Natural killer cell (primary cell): ENCODE measurements at regions of chr11 and their contacts with region 1.

Region 1: DNA sequence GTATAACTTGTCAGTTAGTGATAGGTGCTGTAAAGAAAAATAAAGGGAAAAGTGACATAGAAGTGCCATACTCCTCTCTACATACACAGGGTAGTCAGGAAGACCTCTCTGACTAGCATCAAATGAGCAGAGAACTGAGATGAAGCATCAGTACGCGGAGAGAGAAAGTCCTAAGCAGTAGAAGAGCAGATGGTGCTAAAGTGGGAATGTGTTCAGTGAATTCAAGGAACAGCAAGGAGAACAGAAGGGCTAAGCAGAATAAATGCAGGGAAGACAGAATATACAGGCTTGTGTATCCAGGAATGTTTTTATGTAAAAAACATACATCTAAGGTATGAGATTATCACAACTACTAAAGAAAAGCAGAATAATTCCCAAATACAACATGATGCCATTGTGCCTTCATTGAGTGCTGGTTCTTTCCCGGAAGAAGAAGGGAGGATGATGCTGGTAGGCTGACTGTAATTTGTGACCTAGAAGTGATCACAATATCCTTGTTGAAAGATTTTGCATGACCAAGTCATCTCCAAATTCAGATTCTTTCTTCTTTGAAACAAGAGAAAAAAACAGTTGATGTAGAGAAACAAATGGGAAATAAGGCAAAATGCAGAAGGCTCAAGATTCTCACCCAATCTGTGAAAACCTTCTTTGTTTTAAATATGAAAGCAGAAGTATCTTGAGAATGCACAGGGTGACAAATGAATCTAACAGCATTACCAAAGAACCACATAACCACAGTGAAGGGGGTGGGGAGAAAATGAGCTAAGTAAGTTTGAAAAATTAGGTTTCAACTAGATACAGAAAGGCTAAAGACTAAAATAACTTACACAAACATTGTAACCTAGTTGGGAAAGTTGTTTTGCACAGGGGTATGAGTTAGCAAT is 20.5 kb downstream of the MRE11 start:
- DNase-seq: peak in 1 of 2 donors; percentile 58
- ATAC-seq: peak; percentile 93 to 99 (median 96)
- H3K4me3 ChIP-seq: no peak overlapping the region
- H3K4me3 Mint-ChIP-seq: peak overlapping the region; percentile 69
- H3K27ac ChIP-seq: peak overlapping the region; percentile 87
- H3K27ac Mint-ChIP-seq: peak overlapping the region; percentile 84 to 95
- H3K4me1 ChIP-seq: peaks cover 8% of the 10 kb centered on the region
- H3K4me1 Mint-ChIP-seq: peaks cover 29 to 36% of the 10 kb centered on the region in 2 donors
- H3K27me3 ChIP-seq: no peaks in the 10 kb centered on the region
- H3K27me3 Mint-ChIP-seq: no peaks in the 10 kb centered on the region
- CTCF ChIP-seq: no peak

Region 2: DNA sequence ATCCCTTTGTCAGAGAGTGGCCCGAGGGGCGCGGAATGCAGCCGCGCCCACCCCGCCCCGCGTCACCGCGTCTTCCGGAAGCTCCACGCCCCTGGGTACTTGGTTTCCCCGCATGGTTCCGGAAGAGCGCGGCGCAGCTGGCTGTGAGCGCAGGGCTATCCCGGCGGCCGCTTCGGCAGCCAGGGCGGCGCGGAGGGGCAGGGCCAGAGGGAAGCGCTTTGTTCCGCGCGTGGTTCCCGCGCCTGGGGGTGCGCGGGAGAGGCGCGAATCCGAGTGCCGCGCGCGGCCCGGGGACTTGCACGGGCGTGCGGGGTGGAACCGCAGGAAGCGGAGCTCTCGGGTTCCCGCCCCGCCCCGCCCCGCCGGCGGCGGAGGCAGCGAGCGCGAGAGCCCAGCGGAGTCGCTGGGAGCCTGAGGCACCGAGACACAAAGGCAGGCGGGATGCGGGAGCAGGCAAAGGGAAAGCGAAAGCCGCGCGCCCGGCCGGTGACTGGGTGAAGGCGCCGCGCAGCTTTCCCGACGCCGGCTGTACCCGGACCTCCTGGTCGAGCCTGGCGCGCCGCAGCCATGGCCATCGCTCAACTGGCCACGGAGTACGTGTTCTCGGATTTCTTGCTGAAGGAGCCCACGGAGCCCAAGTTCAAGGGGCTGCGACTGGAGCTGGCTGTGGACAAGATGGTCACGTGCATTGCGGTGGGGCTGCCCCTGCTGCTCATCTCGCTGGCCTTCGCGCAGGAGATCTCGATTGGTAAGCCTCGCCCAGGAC is 344.2 kb before region 1 on chr11 and contains the start of gene PANX1:
- intact Hi-C with region 1: loop called (anchors 5 kb)
- DNase-seq: peak; percentile 61 to 93
- ATAC-seq: peak; percentile 80 to 90 (median 88)
- H3K4me3 ChIP-seq: peak within 1 kb of the TSS; percentile 84
- H3K4me3 Mint-ChIP-seq: no peak within 1 kb of the TSS
- H3K27ac ChIP-seq: peak within 1 kb of the TSS; percentile 85
- H3K27ac Mint-ChIP-seq: no peak within 1 kb of the TSS
- H3K4me1 ChIP-seq: peaks cover 31% of the 10 kb centered on the region
- H3K4me1 Mint-ChIP-seq: peaks cover 22 to 27% of the 10 kb centered on the region in 2 donors
- H3K27me3 ChIP-seq: no peaks in the 10 kb centered on the region
- H3K27me3 Mint-ChIP-seq: no peaks in the 10 kb centered on the region
- CTCF ChIP-seq: no peak
- total RNA-seq, gene PANX1: 8.6 to 13.6 (median 13.4) TPM

Region 3: GRCh38 chr11:94449437-94449836 is 23.7 kb before region 1 on chr11:
- intact Hi-C with region 1: no loop called
- DNase-seq: no peak
- ATAC-seq: no peak
- H3K4me3 ChIP-seq: no peak overlapping the region
- H3K4me3 Mint-ChIP-seq: no peak overlapping the region
- H3K27ac ChIP-seq: no peak overlapping the region
- H3K27ac Mint-ChIP-seq: no peak overlapping the region
- H3K4me1 ChIP-seq: no peaks in the 10 kb centered on the region
- H3K4me1 Mint-ChIP-seq: peaks cover 6 to 12% of the 10 kb centered on the region in 2 donors
- H3K27me3 ChIP-seq: no peaks in the 10 kb centered on the region
- H3K27me3 Mint-ChIP-seq: no peaks in the 10 kb centered on the region
- CTCF ChIP-seq: no peak

Region 4: DNA sequence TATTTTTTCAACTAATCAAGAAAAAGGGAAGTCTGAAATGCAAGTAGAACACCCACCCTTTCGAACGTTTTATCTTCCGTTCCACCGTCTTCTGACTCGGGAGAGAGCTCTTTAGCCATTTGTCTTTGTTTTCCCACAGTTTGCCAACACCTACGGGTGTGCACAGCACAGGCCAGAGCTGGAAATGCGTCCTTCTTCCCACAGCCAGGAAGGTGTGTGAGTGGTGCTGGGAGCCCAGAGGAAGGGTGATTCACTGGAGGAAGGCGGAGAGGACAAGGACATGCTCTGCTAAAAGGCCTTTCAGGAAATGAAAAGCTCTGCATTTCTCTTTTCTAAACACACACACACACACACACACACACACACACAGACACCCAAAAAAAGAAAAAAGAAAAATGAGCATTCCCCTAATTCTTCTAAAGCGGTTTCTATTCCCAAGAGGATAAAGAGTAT is 635.0 kb after region 1 on chr11:
- intact Hi-C with region 1: no loop called
- DNase-seq: no peak
- ATAC-seq: no peak
- H3K4me3 ChIP-seq: no peak overlapping the region
- H3K4me3 Mint-ChIP-seq: no peak overlapping the region
- H3K27ac ChIP-seq: no peak overlapping the region
- H3K27ac Mint-ChIP-seq: no peak overlapping the region
- H3K4me1 ChIP-seq: no peaks in the 10 kb centered on the region
- H3K4me1 Mint-ChIP-seq: peaks cover 16 to 38% of the 10 kb centered on the region in 2 donors
- H3K27me3 ChIP-seq: no peaks in the 10 kb centered on the region
- H3K27me3 Mint-ChIP-seq: no peaks in the 10 kb centered on the region
- CTCF ChIP-seq: no peak